Ovary (tissue), 10 donors: ENCODE measurements at regions of chr16 and their contacts with region 1.

Region 1: DNA sequence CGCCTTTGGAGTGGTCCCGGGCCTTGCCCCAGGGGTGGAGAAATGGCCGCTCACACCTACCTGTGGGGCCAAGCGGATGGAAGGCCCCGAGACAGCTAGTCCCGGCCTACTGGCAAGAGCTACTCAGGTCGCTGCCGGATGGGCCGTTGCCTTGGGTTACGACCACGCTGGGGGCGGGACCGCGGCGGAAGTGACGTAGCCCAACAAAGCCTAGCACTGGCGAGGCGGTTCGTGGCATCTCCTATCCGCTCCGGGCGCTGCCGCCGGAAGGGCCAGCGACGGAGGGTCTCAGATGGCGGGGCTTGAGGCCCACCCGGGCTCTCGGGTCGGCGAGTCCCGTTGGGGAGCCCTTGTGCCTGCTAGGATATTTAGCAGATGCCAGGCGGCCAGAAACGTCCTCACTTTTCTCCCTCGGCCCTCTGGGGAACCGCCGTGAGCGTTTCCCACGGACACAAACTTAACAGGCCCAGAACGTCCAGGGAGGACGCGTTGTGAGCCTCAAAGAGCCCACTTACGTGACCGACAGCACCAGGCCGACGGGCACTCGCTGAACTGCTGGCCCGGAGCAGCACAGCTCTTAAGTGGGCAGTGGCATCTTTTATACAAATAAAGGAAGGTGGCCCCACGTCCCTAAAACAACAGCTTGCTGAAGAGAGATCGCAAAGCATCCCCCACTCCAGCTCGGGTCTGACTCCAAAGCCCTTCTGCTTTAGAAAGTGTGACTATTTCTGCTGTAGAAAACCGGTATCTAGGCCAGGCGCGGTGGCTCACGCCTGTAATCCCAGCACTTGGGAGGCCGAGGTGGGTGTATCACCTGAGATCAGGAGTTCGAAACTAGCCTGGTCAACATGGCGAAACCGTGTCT is at the start of gene C16orf46:
- DNase-seq: peak; percentile 98 to 99 (median 98)
- H3K4me3 ChIP-seq: peak within 1 kb of the TSS; percentile 84
- H3K27ac ChIP-seq: peak within 1 kb of the TSS; percentile 58 to 98
- H3K4me1 ChIP-seq: no peaks in the 10 kb centered on the region
- H3K27me3 ChIP-seq: no peaks in the 10 kb centered on the region
- CTCF ChIP-seq: no peak
- EP300 ChIP-seq: peak; percentile 32
- POLR2A ChIP-seq: peak; percentile 95
- total RNA-seq, gene C16orf46: 0.36 to 3.8 (median 1.1) TPM in 6 of 7 donors, not detected in the other

Region 2: GRCh38 chr16:81006814-81007696 is 70.3 kb before region 1 on chr16 and contains the starts of genes CENPN and CMC2:
- intact Hi-C with region 1: loop called in 1 of 4 experiments (anchors 2 kb)
- DNase-seq: peak; percentile 99 to 100 (median 99)
- H3K4me3 ChIP-seq: peak within 1 kb of the TSS; percentile 81
- H3K27ac ChIP-seq: peak within 1 kb of the TSS; percentile 94 to 98
- H3K4me1 ChIP-seq: peaks cover 9% of the 10 kb centered on the region
- H3K27me3 ChIP-seq: no peaks in the 10 kb centered on the region
- CTCF ChIP-seq: peak in 2 of 3 donors; percentile 21 to 28
- EP300 ChIP-seq: peak; percentile 75
- POLR2A ChIP-seq: peak; percentile 90
- total RNA-seq, gene CENPN: 1.4 to 4.0 (median 2.8) TPM
- total RNA-seq, gene CMC2: 19.1 to 41.1 (median 25.9) TPM